HepG2 (cell line): ENCODE measurements at regions of chr7 and their contacts with region 1.

Region 1: GRCh38 chr7:90455163-90456030 is 14.0 kb upstream of the PTTG1IP2 start:
- DNase-seq: peak; percentile 10
- ATAC-seq: peak; percentile 90
- H3K4me3 ChIP-seq: peak overlapping the region in 2 of 3 experiments; percentile 22 to 41; a peak in 1 of 6 replicates
- H3K27ac ChIP-seq: no peak overlapping the region
- H3K4me1 ChIP-seq: peaks cover 16% of the 10 kb centered on the region
- H3K27me3 ChIP-seq: no peaks in the 10 kb centered on the region
- CTCF ChIP-seq: peak; percentile 68
- EP300 ChIP-seq: no peak
- POLR2A ChIP-seq: no peak
- RAD21 ChIP-seq: no peak

Region 2: DNA sequence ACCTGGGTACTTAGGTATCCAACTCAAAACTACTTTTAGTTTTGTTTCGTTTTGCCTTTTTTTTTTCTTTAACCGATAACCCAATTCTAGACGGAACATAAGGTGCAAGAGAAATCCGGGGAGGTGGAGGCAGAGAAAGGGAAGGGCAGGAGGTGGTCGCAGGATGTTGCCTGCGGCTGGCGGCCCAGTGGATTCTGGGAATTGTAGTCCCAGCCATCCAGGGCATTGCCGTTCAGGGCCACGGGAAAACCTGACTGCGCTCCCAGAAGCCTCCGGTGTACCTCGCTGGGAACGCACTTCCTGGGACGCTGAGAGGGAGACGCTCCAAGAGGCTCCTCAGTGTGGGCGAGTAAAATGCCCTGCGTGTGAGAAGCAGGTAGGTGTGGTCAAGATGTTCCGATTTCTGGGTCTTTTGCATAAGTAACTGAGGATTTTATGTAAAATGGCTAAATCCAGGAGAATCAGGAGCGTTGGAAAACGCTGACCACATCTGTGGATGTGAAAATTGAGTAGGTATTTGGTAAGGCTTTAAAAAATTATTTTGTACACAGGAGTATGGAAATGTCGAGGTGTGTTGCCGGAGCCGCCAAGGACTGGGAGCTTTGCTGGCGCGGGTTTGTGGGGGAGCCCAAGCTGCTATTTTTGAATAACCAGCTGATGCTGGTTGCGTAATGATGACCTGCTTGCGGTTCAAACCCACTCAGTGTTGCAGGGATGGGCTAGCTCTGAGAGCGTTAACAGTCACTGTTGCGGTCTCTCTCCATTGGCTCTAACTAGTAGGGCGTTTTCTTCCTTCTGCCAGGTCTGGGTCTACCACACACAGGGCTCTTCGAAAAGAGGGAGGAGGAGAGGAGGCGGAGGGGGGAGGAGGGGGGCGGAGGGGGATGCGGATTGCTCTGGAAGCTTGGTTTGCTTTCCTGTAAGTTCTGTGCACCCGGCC is 52.0 kb before region 1 on chr7 and contains the start of gene CLDN12:
- CTCF ChIA-PET with region 1: no interaction called
- POLR2A ChIA-PET with region 1: no interaction called
- in situ Hi-C with region 1: no loop called
- intact Hi-C with region 1: no loop called
- DNase-seq: peak; percentile 88
- ATAC-seq: peak; percentile 97
- H3K4me3 ChIP-seq: peak within 1 kb of the TSS; percentile 67 to 78 (median 68)
- H3K27ac ChIP-seq: peak within 1 kb of the TSS; percentile 83
- H3K4me1 ChIP-seq: peaks cover 43% of the 10 kb centered on the region
- H3K27me3 ChIP-seq: no peaks in the 10 kb centered on the region; a peak in 1 of 5 replicates
- CTCF ChIP-seq: 0 out of 2 replicates have a peak, but pooled peaks have one; percentile 2
- EP300 ChIP-seq: no peak; a peak in 1 of 4 replicates
- POLR2A ChIP-seq: peak; percentile 85
- RAD21 ChIP-seq: no peak
- total RNA-seq, gene CLDN12: 32.0 and 44.1 TPM in 2 replicates

Region 3: DNA sequence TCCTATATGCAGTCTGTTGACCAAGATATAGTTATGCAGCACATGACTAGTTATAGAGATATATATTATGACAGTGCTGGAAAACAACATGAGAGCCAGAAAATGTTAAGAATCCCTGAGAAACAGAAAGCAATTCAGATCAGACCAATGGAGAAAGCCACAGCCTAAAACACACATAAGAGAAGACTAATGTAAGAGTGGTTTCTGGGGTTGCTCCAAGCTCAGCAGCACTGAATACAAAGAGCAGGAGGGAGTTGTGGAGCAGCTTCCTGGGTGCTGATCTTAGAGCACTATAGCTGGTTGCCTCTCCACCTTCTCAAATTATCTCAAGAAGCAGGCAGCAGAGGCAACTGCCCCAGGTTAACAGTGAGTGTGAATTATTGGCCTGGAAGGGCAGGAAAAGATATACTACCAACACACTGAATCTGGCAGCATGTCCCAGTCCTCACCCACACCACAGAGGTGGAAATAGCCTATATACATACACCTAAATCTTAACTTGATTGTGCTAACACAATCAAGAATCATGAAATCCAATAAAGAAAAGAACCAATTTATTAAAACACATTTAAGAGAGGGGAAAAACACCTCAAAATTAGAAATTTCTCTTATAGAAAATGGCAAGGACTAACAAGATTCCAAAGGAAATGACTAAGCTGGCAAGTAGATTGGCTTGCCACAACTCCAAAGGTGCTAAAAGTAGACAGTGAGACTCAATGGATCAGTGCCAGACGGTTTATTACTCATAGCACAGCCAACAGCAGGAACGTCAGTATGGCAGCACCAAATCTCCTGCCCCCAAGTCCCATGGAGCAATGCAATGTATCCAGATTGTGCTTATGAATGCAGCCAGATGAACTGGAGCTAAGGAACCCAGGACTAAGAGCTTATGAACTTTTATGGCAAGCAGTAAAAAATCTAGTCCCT is 19.1 kb after region 1 on chr7:
- CTCF ChIA-PET with region 1: no interaction called
- POLR2A ChIA-PET with region 1: no interaction called
- in situ Hi-C with region 1: no loop called
- intact Hi-C with region 1: no loop called
- DNase-seq: no peak
- ATAC-seq: no peak
- H3K4me3 ChIP-seq: no peak overlapping the region
- H3K27ac ChIP-seq: no peak overlapping the region
- H3K4me1 ChIP-seq: no peaks in the 10 kb centered on the region
- H3K27me3 ChIP-seq: no peaks in the 10 kb centered on the region
- CTCF ChIP-seq: no peak
- EP300 ChIP-seq: no peak
- POLR2A ChIP-seq: no peak
- RAD21 ChIP-seq: no peak

Region 4: DNA sequence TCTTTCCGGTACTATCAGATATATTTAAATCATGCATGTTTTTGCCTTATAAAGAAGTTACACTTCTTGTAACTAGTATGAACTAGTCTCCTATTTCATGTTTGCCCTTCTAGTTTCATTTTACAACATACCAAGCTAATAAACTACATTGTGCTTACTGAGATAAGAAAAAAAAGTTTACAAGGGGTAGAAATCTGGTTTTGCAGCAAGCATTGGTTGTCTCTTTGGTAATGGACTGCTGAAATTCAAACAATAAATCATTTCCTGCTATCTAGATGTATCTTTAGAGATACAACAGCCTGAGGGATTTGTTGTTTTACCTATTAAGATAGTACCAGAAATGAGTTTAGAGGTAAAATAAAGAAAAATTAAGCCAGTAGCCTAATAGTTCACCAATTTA is 32.8 kb after region 1 on chr7:
- CTCF ChIA-PET with region 1: no interaction called
- POLR2A ChIA-PET with region 1: no interaction called
- in situ Hi-C with region 1: no loop called
- intact Hi-C with region 1: no loop called
- DNase-seq: no peak
- ATAC-seq: no peak
- H3K4me3 ChIP-seq: no peak overlapping the region
- H3K27ac ChIP-seq: no peak overlapping the region
- H3K4me1 ChIP-seq: no peaks in the 10 kb centered on the region
- H3K27me3 ChIP-seq: no peaks in the 10 kb centered on the region
- CTCF ChIP-seq: no peak
- EP300 ChIP-seq: no peak
- POLR2A ChIP-seq: no peak
- RAD21 ChIP-seq: no peak

Region 5: DNA sequence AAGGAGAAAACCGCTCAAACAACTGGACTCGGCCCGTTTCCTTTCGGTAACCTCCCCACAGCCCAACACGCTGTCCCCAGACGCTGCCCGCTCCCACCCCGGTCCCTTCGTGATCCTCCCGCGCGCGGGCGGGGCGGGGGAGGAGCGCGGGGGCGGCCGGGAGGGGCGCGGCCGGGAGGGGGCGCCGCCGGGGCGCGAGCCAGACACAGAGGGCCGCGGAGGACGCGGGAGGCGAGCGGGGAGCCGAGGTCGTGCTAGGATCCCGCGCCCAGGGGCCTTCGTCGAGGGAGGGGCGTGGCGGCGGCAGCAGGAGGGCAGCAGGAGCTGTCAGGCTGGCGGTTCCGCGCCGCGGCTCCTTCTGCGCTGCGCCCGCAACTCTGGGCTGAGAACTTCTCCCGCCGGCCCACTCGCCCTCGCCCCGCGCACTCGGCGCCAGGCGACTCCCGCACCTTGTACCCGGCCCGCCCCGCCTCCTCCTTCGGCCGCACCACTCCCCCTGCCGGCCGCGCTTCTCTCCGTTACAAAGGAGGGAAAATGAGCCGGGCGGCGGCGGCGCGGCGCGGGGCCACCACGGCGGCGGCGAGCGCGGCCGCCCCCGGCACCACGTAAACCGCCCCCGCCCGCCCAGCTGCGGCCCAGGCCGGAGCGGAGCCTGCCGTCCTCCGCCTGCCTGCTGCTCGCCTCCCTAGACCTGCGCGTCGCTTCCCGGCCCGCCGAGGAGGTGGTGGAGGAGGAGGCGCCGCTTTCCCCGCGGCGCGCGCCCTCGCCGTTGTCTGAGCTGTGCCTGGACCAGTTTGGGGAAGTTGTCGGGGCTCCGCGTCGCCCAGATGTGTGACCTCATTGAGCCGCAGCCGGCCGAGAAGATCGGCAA is 140.6 kb after region 1 on chr7 and contains the start of gene CDK14:
- CTCF ChIA-PET with region 1: no interaction called
- POLR2A ChIA-PET with region 1: no interaction called
- in situ Hi-C with region 1: loop called (anchors 10 kb)
- intact Hi-C with region 1: loop called (anchors 2 kb)
- DNase-seq: peak; percentile 46
- ATAC-seq: peak; percentile 97
- H3K4me3 ChIP-seq: peak within 1 kb of the TSS; percentile 52 to 70 (median 54); a peak in 4 of 6 replicates
- H3K27ac ChIP-seq: no peak within 1 kb of the TSS
- H3K4me1 ChIP-seq: peaks cover 8% of the 10 kb centered on the region; the same call in 1 of the 2 replicates
- H3K27me3 ChIP-seq: peaks cover 2 to 20% of the 10 kb centered on the region in 2 experiments; a peak in 2 of 5 replicates
- CTCF ChIP-seq: peak; percentile 68
- EP300 ChIP-seq: no peak
- POLR2A ChIP-seq: no peak
- RAD21 ChIP-seq: peak; percentile 68
- total RNA-seq, gene CDK14: 0.66 and 0.71 TPM in 2 replicates

Region 6: DNA sequence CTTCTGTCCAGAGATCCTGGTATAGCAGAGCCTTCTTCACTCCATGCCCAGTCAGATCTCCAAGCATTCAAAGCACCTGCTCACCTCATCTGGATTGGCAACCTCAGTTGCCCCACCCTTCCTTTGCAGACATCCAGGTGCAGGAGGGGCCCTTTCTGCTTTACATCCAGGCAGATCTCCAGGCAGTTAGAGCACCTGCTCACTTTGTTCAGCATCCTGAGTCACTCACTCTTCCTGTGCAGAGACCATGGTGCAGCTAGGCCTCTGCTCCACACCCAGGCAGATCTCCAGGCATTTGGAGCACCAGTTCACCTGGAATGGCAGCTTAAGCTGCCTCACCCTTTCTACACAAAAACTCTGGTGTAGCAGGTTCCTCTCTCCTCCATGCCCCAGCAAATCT is 293.9 kb after region 1 on chr7:
- CTCF ChIA-PET with region 1: no interaction called
- POLR2A ChIA-PET with region 1: no interaction called
- in situ Hi-C with region 1: no loop called
- intact Hi-C with region 1: loop called (anchors 5 kb)
- DNase-seq: no peak
- ATAC-seq: no peak
- H3K4me3 ChIP-seq: no peak overlapping the region
- H3K27ac ChIP-seq: no peak overlapping the region
- H3K4me1 ChIP-seq: no peaks in the 10 kb centered on the region
- H3K27me3 ChIP-seq: peaks cover 0 to 18% of the 10 kb centered on the region in 2 experiments; a peak in 3 of 5 replicates
- CTCF ChIP-seq: no peak
- EP300 ChIP-seq: no peak
- POLR2A ChIP-seq: no peak
- RAD21 ChIP-seq: no peak

Region 7: GRCh38 chr7:91089382-91089963 is 634.1 kb after region 1 on chr7:
- CTCF ChIA-PET with region 1: no interaction called
- POLR2A ChIA-PET with region 1: no interaction called
- in situ Hi-C with region 1: no loop called
- intact Hi-C with region 1: no loop called
- DNase-seq: peak; percentile 16
- ATAC-seq: peak; percentile 69
- H3K4me3 ChIP-seq: no peak overlapping the region
- H3K27ac ChIP-seq: no peak overlapping the region
- H3K4me1 ChIP-seq: no peaks in the 10 kb centered on the region
- H3K27me3 ChIP-seq: no peaks in the 10 kb centered on the region
- CTCF ChIP-seq: peak; percentile 59
- EP300 ChIP-seq: no peak
- POLR2A ChIP-seq: no peak
- RAD21 ChIP-seq: no peak